Right cardiac atrium (tissue), 5 donors: ENCODE measurements at regions of chr17 and their contacts with region 1.

Region 1: DNA sequence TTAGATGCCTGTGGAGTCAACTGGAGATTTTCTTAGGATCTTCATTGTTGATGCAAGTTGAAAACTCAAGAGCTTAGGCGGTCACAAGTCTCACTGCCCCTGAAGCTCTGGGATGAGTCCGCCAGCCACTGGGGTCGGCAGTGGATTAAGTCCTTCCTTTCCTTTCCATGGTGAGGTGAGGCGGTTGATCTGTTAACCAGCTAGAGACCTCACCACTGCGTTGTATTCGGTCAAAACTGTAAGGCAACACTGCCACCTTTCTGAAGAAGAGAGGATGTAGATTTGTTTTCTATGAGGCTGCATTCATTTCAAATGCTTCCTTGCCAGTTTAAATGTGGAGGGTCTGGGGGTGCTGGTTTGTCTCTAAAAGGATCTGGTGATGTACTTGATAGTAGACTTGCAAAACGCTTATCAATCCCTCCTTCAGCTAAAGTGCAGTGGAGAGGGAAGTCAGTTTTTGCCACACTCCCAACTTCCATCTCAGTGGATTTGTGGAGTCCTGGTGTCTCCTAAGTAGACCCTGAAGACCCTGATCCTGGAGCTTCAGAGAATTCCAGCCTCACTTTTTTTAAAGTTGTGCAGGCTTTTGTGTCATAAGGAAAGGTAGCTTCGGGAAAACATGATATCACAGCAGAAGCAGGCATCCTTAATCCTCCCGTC is 1.7 kb downstream of the MYOCD start:
- DNase-seq: peak in 1 of 3 donors; percentile 45
- ATAC-seq: peak; percentile 64 to 67
- H3K4me3 ChIP-seq: peak overlapping the region; percentile 66
- H3K27ac ChIP-seq: peak overlapping the region; percentile 80
- H3K4me1 ChIP-seq: no peaks in the 10 kb centered on the region
- H3K27me3 ChIP-seq: no peaks in the 10 kb centered on the region

Region 2: DNA sequence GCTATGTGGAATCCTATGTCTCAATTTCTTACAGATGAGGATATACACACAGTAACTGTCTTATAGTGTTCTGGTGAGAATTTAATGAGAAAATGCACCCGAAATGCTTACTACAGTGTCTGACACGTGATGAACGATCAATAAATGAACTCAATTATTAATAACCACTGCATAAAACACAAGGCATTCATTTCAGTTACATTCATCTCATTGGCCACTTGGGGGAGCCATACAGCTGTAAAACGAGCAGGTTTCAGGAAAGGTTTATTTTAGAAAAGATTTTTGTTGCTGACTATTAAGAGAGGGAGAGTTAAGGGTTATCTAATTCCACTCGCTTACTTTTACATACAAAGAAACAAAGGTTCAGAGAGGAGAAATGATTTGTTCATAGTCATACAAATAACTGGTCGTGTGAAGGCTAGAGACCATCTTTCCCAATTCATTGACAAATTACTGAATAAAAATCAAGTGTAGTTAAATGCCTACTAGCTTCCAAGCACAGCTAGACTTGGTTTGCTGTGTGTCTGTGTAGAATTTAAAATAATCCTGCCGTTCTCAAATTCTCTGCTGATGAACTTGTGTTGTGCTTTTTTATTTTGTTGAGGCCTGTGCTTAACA is 486.7 kb before region 1 on chr17:
- intact Hi-C with region 1: loop called in 2 of 4 experiments (anchors 5 to 10 kb)
- DNase-seq: no peak
- ATAC-seq: peak; percentile 39 to 61
- H3K4me3 ChIP-seq: no peak overlapping the region
- H3K27ac ChIP-seq: no peak overlapping the region
- H3K4me1 ChIP-seq: peaks cover 1% of the 10 kb centered on the region
- H3K27me3 ChIP-seq: no peaks in the 10 kb centered on the region

Region 3: GRCh38 chr17:12256380-12256995 is 410.9 kb before region 1 on chr17:
- intact Hi-C with region 1: loop called in 3 of 4 experiments (anchors 5 to 10 kb)
- DNase-seq: peak; percentile 23 to 57 (median 45)
- ATAC-seq: peak; percentile 66 to 70
- H3K4me3 ChIP-seq: no peak overlapping the region
- H3K27ac ChIP-seq: no peak overlapping the region
- H3K4me1 ChIP-seq: no peaks in the 10 kb centered on the region
- H3K27me3 ChIP-seq: no peaks in the 10 kb centered on the region

Region 4: DNA sequence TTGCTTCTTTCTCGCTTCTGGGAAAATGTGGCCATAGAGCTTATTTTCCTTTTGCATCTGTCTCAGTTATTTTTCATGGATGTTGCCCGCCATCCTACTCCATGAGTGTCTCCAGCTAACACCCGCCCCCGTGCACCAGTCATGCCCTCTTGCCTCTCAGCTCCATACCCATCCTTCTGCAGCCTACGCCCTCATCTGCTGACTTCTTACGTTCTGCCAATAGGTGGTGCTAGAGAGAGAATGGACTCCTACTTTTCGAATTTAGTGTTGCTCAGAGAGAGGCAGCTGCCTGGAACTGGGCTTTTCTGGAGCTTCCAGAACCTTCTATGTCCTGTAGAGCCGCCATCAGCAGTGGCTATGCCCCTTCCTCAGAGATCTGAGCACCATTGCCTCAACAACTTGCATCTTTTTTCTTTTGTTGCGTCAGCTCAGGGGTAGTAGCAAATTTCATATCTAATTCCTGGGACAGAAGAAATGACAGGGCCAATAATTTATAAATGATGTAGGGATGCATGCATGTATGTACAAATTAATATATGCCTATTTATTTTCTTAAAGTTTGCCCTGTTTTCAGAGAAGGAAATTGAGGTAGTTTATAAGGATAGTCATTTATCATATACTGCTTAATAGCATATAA is 121.4 kb before region 1 on chr17:
- intact Hi-C with region 1: loop called in 3 of 4 experiments (anchors 2 to 5 kb)
- DNase-seq: no peak
- ATAC-seq: peak; percentile 81 to 82
- H3K4me3 ChIP-seq: no peak overlapping the region
- H3K27ac ChIP-seq: no peak overlapping the region
- H3K4me1 ChIP-seq: no peaks in the 10 kb centered on the region
- H3K27me3 ChIP-seq: peaks cover 3% of the 10 kb centered on the region

Region 5: DNA sequence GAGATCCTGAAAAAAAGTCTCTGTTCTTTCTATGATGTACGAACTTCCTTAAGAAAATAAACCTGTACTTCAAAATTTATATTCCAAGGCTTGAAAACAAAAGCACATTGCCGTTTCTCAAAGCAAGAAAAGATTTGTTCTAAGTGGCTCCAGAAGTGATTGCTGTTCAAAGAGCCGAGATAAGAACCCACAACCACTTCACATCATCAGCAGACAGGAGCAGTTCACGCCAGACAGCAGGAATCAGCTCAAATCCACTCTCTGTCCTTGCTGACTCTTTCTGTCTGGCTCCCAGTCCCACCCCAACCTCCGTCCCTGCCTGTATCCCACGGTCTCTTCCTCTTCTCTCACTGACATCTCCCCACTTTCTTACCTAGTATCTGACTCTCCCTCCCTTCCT is 86.8 kb before region 1 on chr17:
- intact Hi-C with region 1: loop called in 1 of 4 experiments (anchors 2 kb)
- DNase-seq: no peak
- ATAC-seq: no peak
- H3K4me3 ChIP-seq: no peak overlapping the region
- H3K27ac ChIP-seq: no peak overlapping the region
- H3K4me1 ChIP-seq: no peaks in the 10 kb centered on the region
- H3K27me3 ChIP-seq: no peaks in the 10 kb centered on the region

Region 6: GRCh38 chr17:12709063-12709462 is 41.6 kb after region 1 on chr17:
- intact Hi-C with region 1: no loop called
- DNase-seq: no peak
- ATAC-seq: no peak
- H3K4me3 ChIP-seq: no peak overlapping the region
- H3K27ac ChIP-seq: no peak overlapping the region
- H3K4me1 ChIP-seq: peaks cover 6% of the 10 kb centered on the region
- H3K27me3 ChIP-seq: no peaks in the 10 kb centered on the region

Region 7: DNA sequence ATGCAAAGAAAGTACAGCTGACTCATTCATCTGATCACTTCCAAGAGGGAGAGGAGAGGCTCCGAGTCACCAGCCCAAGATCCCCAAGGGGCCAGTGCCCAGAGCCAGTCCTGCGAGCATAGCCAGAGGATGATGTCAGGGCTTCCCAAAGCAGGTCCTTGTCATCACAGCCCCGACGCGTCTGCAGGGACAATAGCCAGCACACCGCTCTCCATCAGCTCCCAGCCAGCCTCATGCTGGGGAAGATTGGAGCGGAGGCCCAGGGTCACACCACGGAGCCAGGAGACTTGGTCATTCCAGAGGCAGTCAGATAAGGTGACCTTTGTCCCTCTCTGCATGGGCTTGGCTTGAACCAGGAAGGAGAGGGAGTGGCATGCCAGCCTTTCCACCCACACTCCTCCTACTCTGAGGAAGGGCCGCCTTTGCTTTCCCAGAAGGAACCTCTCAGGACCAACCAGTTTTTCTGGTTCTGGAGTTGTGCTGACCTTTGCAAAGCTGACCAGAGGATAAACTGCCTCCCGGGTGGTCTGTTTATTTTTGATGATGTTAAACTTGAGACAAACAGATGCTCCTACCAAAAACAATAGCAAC is 63.6 kb after region 1 on chr17:
- intact Hi-C with region 1: loop called in 1 of 4 experiments (anchors 5 kb)
- DNase-seq: peak; percentile 82 to 93 (median 90)
- ATAC-seq: peak; percentile 88 to 89
- H3K4me3 ChIP-seq: no peak overlapping the region
- H3K27ac ChIP-seq: peak overlapping the region; percentile 90
- H3K4me1 ChIP-seq: peaks cover 9% of the 10 kb centered on the region
- H3K27me3 ChIP-seq: no peaks in the 10 kb centered on the region

Region 8: GRCh38 chr17:12744298-12744697 is 76.9 kb after region 1 on chr17:
- intact Hi-C with region 1: loop called in 3 of 4 experiments (anchors 2 to 5 kb)
- DNase-seq: peak in 2 of 3 donors; percentile 64 to 67
- ATAC-seq: peak; percentile 84 to 89
- H3K4me3 ChIP-seq: no peak overlapping the region
- H3K27ac ChIP-seq: peak overlapping the region; percentile 99
- H3K4me1 ChIP-seq: peaks cover 2% of the 10 kb centered on the region
- H3K27me3 ChIP-seq: no peaks in the 10 kb centered on the region